A673 (cell line): ENCODE measurements at regions of chr13 and their contacts with region 1.

Region 1: GRCh38 chr13:110715395-110716235 is 2.1 kb downstream of the ING1 start:
- DNase-seq: peak; percentile 100
- H3K4me3 ChIP-seq: peak overlapping the region; percentile 95
- H3K27ac ChIP-seq: peak overlapping the region; percentile 99
- H3K4me1 ChIP-seq: peaks cover 4% of the 10 kb centered on the region
- H3K27me3 ChIP-seq: no peaks in the 10 kb centered on the region
- CTCF ChIP-seq: peak; percentile 28; the same call in 1 of the 2 replicates

Region 2: DNA sequence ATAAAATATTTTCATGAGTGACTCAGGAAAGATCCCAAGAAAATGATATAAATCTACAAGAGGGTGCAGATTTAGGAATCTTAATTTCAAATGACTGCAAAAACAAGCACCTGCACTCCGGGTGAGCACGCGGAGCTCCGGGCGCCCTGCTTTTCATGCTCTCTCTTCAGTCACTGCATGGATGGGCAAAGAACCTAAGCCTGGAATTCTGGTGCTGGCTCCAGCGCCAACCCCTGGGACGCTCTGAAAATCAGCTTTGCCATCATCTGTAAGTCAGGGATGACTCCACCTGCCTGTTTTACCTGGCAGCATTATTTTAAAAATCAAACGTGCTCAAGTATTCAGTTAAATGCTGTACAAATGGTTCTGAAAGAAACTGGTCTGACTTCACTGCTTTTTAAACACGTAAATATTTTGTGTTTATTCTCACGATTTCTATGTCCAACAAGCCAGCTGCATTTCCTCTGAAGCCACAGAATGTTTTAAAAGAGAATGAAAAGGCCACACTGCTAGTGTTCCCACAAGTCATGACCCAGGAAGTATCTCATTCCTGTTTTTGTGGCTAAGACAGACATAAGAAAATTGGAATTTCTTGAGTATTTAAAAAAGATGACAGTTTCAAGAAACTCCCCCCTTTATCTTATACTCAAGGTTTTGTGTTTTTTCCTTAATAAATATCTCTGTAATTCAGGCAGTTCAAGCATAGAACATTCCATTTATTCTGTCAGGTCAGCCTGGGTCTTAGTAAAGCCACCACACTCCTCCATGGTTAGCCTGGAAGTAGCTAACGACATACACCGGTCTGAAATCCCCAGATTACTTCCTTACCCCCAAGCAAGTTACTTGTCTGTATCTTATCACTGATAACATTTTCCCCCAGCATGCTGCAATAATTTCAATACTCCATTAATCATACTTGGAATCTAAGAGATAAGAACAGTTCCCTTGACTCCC is 489.7 kb before region 1 on chr13:
- CTCF ChIA-PET with region 1: no interaction called
- POLR2A ChIA-PET with region 1: no interaction called
- intact Hi-C with region 1: loop called (anchors 10 kb)
- DNase-seq: no peak
- H3K4me3 ChIP-seq: no peak overlapping the region
- H3K27ac ChIP-seq: no peak overlapping the region
- H3K4me1 ChIP-seq: peaks cover 30% of the 10 kb centered on the region
- H3K27me3 ChIP-seq: no peaks in the 10 kb centered on the region
- CTCF ChIP-seq: no peak

Region 3: DNA sequence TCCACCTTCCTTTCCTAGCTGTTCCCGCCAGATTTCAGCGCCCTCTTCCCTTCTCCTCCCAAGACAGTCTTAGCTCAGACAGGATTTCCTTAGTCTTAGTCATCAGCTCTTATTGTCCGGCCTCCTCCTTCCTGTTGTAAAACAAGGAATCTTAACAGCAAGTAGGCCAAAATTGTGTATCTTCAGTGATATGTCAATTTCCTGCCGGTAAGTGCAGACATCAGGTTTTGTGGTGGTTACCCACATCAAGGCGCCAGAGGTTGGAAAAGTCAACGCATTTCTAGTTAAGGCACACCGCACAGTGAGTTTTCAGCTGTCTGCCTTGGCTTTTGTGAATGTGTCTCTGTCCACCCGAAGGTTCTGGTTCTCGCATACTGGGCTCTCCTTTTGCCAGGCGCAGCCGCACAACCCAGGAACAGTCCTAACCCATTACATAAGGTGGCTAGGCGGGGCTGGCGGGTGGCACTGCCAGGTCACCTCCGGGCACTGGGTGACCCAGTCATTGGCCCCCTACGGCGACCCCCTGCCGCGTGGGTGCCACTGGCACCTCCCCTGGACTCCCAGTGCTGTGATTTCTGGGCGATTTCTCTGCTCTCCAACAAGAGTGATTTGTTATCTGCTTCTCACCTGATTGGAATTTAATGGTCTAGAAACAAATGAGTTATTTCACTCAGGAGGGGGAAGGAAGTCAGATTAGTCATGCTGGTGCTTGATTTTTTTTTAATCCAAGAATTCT is 395.7 kb before region 1 on chr13:
- CTCF ChIA-PET with region 1: interaction called, 5 read pairs
- POLR2A ChIA-PET with region 1: no interaction called
- intact Hi-C with region 1: loop called (anchors 10 kb)
- DNase-seq: peak; percentile 85
- H3K4me3 ChIP-seq: peak overlapping the region; percentile 31
- H3K27ac ChIP-seq: peak overlapping the region; percentile 85
- H3K4me1 ChIP-seq: peaks cover 72% of the 10 kb centered on the region
- H3K27me3 ChIP-seq: no peaks in the 10 kb centered on the region
- CTCF ChIP-seq: no peak

Region 4: GRCh38 chr13:110396913-110397381 is 318.7 kb before region 1 on chr13:
- CTCF ChIA-PET with region 1: no interaction called
- POLR2A ChIA-PET with region 1: no interaction called
- intact Hi-C with region 1: no loop called
- DNase-seq: no peak
- H3K4me3 ChIP-seq: no peak overlapping the region
- H3K27ac ChIP-seq: no peak overlapping the region
- H3K4me1 ChIP-seq: peaks cover 24% of the 10 kb centered on the region
- H3K27me3 ChIP-seq: no peaks in the 10 kb centered on the region
- CTCF ChIP-seq: no peak

Region 5: GRCh38 chr13:110826861-110827672 is 111.5 kb after region 1 on chr13:
- CTCF ChIA-PET with region 1: no interaction called
- POLR2A ChIA-PET with region 1: no interaction called
- intact Hi-C with region 1: no loop called
- DNase-seq: no peak
- H3K4me3 ChIP-seq: no peak overlapping the region
- H3K27ac ChIP-seq: no peak overlapping the region
- H3K4me1 ChIP-seq: no peaks in the 10 kb centered on the region
- H3K27me3 ChIP-seq: no peaks in the 10 kb centered on the region
- CTCF ChIP-seq: no peak

Region 6: GRCh38 chr13:111202745-111203144 is 487.1 kb after region 1 on chr13:
- CTCF ChIA-PET with region 1: no interaction called
- POLR2A ChIA-PET with region 1: no interaction called
- intact Hi-C with region 1: no loop called
- DNase-seq: peak; percentile 92
- H3K4me3 ChIP-seq: no peak overlapping the region
- H3K27ac ChIP-seq: peak overlapping the region; percentile 82
- H3K4me1 ChIP-seq: peaks cover 39% of the 10 kb centered on the region
- H3K27me3 ChIP-seq: no peaks in the 10 kb centered on the region
- CTCF ChIP-seq: no peak